Transverse colon (tissue), 4 donors: ENCODE measurements at regions of chr16 and their contacts with region 1.

Region 1: GRCh38 chr16:24010440-24011089 is 174.8 kb downstream of the PRKCB start:
- DNase-seq: peak; percentile 85
- H3K4me3 ChIP-seq: no peak overlapping the region
- H3K27ac ChIP-seq: peak overlapping the region in 1 of 4 donors; percentile 11
- H3K4me1 ChIP-seq: peaks cover 0 to 28% (median 15%) of the 10 kb centered on the region in 4 donors
- H3K27me3 ChIP-seq: no peaks in the 10 kb centered on the region
- CTCF ChIP-seq: peak; percentile 70 to 86 (median 82)
- EP300 ChIP-seq: no peak
- POLR2A ChIP-seq: no peak

Region 2: GRCh38 chr16:23795378-23795777 is 215.2 kb before region 1 on chr16:
- in situ Hi-C with region 1: loop called in 3 of 4 experiments (anchors 5 to 10 kb)
- intact Hi-C with region 1: no loop called
- DNase-seq: no peak
- H3K4me3 ChIP-seq: no peak overlapping the region
- H3K27ac ChIP-seq: peak overlapping the region; percentile 49 to 70 (median 66)
- H3K4me1 ChIP-seq: peaks cover 0 to 14% (median 2%) of the 10 kb centered on the region in 4 donors
- H3K27me3 ChIP-seq: no peaks in the 10 kb centered on the region
- CTCF ChIP-seq: no peak
- EP300 ChIP-seq: no peak
- POLR2A ChIP-seq: no peak

Region 3: DNA sequence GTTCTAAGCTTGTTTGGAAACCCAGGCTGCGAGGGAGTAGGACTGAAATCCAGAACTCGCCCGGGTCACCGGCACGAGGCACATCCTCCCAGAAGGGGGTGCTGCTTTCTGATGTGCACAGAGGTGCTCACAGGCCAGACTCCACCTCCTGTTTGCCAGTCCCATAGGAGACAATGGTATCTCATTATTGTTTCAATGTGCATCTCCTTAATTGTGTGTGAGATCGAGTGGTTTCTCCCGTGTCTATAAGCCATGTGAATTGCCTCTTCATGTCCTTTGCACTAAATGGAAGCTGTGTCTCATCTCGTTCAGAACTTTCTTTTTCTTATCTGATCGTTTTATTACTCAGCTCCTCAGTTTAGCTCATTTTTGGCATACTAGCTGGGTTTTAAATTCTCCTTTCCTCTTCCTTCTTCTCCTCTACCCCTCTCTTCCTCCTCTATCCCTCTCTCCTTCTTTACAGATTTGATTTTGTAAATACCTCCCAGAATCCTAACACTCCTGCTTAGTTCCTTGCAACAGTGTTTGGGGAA is 206.9 kb before region 1 on chr16:
- in situ Hi-C with region 1: loop called (anchors 5 to 10 kb)
- intact Hi-C with region 1: loop called (anchors 2 kb)
- DNase-seq: peak; percentile 82
- H3K4me3 ChIP-seq: no peak overlapping the region
- H3K27ac ChIP-seq: no peak overlapping the region
- H3K4me1 ChIP-seq: peaks cover 0 to 23% (median 13%) of the 10 kb centered on the region in 4 donors
- H3K27me3 ChIP-seq: no peaks in the 10 kb centered on the region
- CTCF ChIP-seq: peak; percentile 33 to 66 (median 57)
- EP300 ChIP-seq: no peak
- POLR2A ChIP-seq: no peak

Region 4: DNA sequence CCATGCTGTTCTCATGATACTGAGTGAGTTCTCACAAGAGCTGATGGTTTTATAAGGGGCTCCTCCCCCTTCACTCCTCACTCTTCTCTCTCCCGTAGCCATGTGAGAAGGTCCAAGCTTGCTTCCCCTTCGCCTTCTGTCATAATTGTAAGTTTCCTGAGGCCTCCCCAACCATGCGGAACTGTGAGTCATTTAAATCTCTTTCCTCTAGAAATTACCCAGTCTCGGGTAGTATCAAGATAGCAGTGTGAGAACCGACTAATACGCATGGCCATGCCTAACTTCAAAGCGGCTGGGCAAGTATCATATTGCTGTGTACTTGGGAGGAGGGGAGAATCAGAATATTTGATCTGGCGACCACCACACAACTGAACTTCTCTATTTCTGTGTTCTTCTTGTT is 86.4 kb before region 1 on chr16:
- in situ Hi-C with region 1: no loop called
- intact Hi-C with region 1: no loop called
- DNase-seq: no peak
- H3K4me3 ChIP-seq: no peak overlapping the region
- H3K27ac ChIP-seq: no peak overlapping the region
- H3K4me1 ChIP-seq: no peaks in the 10 kb centered on the region
- H3K27me3 ChIP-seq: no peaks in the 10 kb centered on the region
- CTCF ChIP-seq: no peak
- EP300 ChIP-seq: no peak
- POLR2A ChIP-seq: no peak